ENCODE measurements at regions of chr2 and their contacts with region 1.

Region 1: DNA sequence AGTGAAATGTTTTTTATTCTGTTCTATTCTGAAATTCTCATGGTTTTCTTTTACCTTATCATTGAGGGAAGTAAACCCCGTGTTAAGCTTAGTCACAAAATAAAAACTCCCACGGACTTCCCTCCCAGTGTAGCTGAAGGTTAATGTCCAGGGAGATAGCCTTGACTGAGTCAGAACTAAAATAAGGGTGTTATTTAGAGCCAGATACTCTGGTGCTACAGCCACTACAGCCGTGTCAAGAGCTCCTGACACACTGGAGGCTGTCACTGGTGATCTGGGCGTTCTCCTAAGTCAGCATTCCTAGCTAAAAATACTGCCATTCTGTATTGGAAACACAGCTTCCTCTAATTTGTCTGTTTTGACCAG is 82.0 kb upstream of the RANBP2 start:
- DNase-seq: no peak
- ATAC-seq: no peak
- H3K4me3 Mint-ChIP-seq: no peak overlapping the region
- H3K27ac Mint-ChIP-seq: no peak overlapping the region
- H3K4me1 Mint-ChIP-seq: peaks cover 75% of the 10 kb centered on the region
- H3K27me3 Mint-ChIP-seq: no peaks in the 10 kb centered on the region

Region 2: GRCh38 chr2:108454440-108454839 is 182.8 kb before region 1 on chr2:
- CTCF ChIA-PET with region 1: no interaction called
- DNase-seq: no peak
- ATAC-seq: no peak
- H3K4me3 Mint-ChIP-seq: no peak overlapping the region
- H3K27ac Mint-ChIP-seq: no peak overlapping the region
- H3K4me1 Mint-ChIP-seq: peaks cover 32% of the 10 kb centered on the region
- H3K27me3 Mint-ChIP-seq: no peaks in the 10 kb centered on the region

Region 3: DNA sequence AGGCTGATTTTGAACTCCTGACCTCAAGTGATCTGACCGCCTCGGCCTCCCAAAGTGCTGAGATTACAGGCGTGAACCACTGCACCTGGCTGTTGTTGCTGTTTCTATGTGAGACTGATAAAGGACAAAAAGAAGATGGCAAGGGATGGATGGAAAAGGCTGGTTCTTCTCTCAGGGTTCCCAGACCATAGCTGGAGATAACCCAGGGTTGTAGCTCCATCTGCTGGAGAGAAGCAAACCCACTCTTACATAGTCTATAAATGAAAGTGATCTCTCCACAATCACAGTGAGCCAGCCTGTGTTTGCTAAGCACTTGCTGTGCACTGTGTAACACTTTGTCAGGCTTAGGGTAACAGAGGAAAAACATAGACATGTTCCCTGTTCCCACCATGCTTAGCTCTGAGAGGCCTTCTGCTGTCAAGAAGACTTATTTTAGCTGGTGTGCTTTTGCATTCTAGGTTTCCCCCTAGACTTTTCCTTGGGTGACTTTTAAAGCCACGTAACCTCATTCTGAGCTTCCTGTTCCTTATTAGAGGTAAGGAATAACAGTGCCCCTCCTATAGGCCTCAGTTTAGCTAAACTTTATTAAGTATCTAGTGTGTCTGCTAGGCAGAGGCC is 53.3 kb before region 1 on chr2:
- CTCF ChIA-PET with region 1: interaction called, 21 read pairs
- DNase-seq: peak; percentile 72
- ATAC-seq: peak; percentile 88
- H3K4me3 Mint-ChIP-seq: no peak overlapping the region
- H3K27ac Mint-ChIP-seq: no peak overlapping the region
- H3K4me1 Mint-ChIP-seq: peaks cover 41% of the 10 kb centered on the region
- H3K27me3 Mint-ChIP-seq: no peaks in the 10 kb centered on the region

Region 4: DNA sequence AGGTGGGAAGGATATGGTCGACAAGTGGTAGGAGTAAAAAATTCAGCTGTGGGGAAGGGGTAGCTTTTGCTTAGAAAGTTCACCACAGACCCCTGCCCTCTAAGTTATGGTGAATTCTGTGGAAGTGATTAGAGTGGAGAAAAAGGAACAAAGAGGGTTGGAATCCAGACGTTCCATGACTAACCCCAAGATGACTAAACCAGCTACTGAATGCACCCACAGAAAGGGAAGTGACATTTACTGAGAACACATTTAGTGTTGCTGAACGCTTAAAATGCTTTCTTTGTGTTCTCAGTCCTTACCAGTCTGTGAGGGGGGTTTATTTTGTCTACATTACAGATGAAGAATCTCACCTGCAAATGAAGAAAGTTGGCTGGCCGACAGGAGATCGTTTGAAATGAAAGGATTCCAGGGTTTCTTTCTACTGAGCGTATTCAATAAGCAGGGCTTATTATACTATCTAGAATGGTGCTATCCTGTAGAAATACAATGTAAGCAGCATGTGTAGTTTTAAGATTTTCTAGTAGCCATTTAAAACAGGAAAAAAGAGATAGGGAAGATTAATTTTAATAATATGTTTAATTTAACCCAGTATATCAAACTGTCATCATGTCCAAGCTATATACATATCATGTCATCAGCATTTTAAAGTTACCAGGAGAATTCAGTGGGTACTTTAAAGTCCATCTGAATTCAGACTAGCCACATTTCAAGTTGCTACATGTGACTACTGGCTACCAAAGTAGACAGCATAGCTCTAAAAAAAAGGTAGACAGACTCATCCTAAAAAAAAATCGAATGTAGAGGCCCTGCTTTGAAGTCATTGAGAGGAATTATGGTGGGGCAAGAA is 42.9 kb before region 1 on chr2:
- CTCF ChIA-PET with region 1: interaction called, 29 read pairs
- DNase-seq: peak; percentile 51
- ATAC-seq: peak; percentile 87
- H3K4me3 Mint-ChIP-seq: peak overlapping the region; percentile 50
- H3K27ac Mint-ChIP-seq: peak overlapping the region; percentile 75
- H3K4me1 Mint-ChIP-seq: peaks cover 47% of the 10 kb centered on the region
- H3K27me3 Mint-ChIP-seq: no peaks in the 10 kb centered on the region

Region 5: GRCh38 chr2:108607706-108608301 is 29.5 kb before region 1 on chr2:
- CTCF ChIA-PET with region 1: interaction called, 171 read pairs
- DNase-seq: peak; percentile 71
- ATAC-seq: no peak
- H3K4me3 Mint-ChIP-seq: no peak overlapping the region
- H3K27ac Mint-ChIP-seq: no peak overlapping the region
- H3K4me1 Mint-ChIP-seq: peaks cover 75% of the 10 kb centered on the region
- H3K27me3 Mint-ChIP-seq: no peaks in the 10 kb centered on the region

Region 6: DNA sequence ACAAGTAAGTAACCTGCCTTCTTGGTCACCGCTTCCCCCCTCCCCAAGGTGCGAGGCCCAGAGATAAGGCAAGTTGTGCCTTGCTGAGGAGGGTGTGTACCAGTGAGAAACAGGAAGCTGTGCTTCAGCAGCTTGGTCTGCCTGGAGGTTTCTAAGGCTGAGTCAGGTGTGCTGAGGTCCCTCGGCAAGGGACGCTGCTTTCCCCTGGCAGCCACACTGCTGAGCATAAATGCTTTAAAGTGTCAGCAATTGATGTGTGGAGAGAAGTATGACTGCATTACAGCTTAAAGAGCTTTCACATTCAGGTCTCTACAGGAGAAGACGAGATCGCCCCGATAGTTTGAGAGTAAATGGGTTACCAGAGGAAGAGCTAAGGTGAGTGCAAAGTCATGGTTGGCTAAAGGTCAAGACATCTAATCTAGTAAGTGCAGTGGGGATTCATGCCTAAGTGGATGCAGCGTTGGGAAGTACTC is 16.2 kb before region 1 on chr2:
- CTCF ChIA-PET with region 1: interaction called, 171 read pairs
- DNase-seq: peak; percentile 91
- ATAC-seq: peak; percentile 95
- H3K4me3 Mint-ChIP-seq: peak overlapping the region; percentile 79
- H3K27ac Mint-ChIP-seq: peak overlapping the region; percentile 90
- H3K4me1 Mint-ChIP-seq: peaks cover 75% of the 10 kb centered on the region
- H3K27me3 Mint-ChIP-seq: no peaks in the 10 kb centered on the region

Measured in activated CD8-positive, alpha-beta memory T cell treated with anti-CD3 and anti-CD28 coated beads, Interleukin-2, amount 10 ng/mL, durations not matched to agents 7 days and 5 days (primary cell).